ENCODE measurements at regions of chr20 and their contacts with region 1.

Region 1: DNA sequence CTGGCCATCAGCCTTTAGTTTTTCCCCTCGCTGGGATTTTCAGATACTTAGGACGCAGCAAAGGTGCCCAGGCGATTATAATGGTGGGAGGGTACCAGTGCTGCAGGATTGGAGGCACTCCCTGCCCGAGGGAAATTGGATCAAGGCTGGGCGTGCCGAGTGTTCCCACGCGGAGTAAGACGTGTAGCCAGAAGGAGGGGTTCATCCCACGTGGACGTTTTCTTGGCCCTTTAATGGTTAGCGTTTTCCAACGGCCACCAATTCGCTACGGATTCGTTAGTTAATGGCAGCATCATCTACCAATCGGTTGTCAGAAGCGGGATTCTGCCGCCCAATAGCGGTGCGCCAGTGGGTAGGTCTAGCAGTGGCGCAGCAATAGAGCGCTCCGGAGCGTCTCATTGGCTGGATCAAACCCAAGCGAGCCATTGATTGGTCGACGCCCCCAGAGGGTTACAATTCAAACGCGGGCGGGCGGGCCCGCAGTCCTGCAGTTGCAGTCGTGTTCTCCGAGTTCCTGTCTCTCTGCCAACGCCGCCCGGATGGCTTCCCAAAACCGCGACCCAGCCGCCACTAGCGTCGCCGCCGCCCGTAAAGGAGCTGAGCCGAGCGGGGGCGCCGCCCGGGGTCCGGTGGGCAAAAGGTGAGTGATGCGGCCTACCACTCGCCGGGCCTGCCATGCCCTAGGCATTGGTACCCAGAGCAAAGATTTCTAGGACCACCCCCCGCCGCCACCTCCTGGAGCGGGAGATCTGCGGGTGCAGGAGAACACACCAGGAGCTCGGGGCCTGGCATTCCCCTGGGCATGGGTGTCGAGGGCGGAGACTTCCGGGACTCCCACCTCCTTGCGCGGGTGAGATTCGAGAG is at the start of gene UBE2C:
- DNase-seq: peak; percentile 95 to 99
- H3K4me3 ChIP-seq: peak within 1 kb of the TSS; percentile 56 to 80
- H3K27ac ChIP-seq: peak within 1 kb of the TSS; percentile 16 to 45
- H3K4me1 ChIP-seq: peaks cover 9% of the 10 kb centered on the region in 2 donors
- H3K27me3 ChIP-seq: no peaks in the 10 kb centered on the region
- CTCF ChIP-seq: no peak
- total RNA-seq, gene UBE2C: not detected

Region 2: DNA sequence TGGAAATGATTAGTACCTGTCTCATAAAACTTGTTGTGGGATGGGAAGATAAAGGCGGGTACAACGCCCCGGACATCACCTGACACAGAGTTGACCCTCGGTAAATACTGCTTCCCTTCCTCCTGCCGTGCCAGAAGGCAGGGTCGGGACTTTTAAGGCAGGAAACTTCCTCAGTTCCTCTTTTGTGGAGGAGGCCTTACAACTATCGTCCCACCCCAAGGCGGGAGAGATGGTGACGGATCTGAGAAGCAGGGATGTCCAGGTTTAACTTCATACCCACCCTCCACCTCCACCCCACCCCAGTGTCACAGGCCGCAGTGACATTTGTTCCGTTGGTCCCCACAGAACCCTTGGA is 20.1 kb before region 1 on chr20:
- intact Hi-C with region 1: loop called (anchors 1 kb)
- DNase-seq: no peak
- H3K4me3 ChIP-seq: peak overlapping the region; percentile 79 to 89
- H3K27ac ChIP-seq: peak overlapping the region; percentile 94
- H3K4me1 ChIP-seq: peaks cover 4% of the 10 kb centered on the region in 2 donors
- H3K27me3 ChIP-seq: no peaks in the 10 kb centered on the region
- CTCF ChIP-seq: no peak

Region 3: GRCh38 chr20:45867819-45868176 is 55.4 kb after region 1 on chr20:
- intact Hi-C with region 1: no loop called
- DNase-seq: no peak
- H3K4me3 ChIP-seq: no peak overlapping the region
- H3K27ac ChIP-seq: no peak overlapping the region
- H3K4me1 ChIP-seq: no peaks in the 10 kb centered on the region
- H3K27me3 ChIP-seq: no peaks in the 10 kb centered on the region
- CTCF ChIP-seq: no peak

Region 4: GRCh38 chr20:45880988-45881788 is 68.8 kb after region 1 on chr20 and contains the start of gene ZSWIM1:
- intact Hi-C with region 1: loop called (anchors 5 kb)
- DNase-seq: peak; percentile 99 to 100
- H3K4me3 ChIP-seq: peak within 1 kb of the TSS; percentile 67 to 71
- H3K27ac ChIP-seq: peak within 1 kb of the TSS; percentile 83 to 88
- H3K4me1 ChIP-seq: peaks cover 0 to 14% of the 10 kb centered on the region in 2 donors
- H3K27me3 ChIP-seq: no peaks in the 10 kb centered on the region
- CTCF ChIP-seq: no peak
- total RNA-seq, gene ZSWIM1: 3.5 TPM

Region 5: DNA sequence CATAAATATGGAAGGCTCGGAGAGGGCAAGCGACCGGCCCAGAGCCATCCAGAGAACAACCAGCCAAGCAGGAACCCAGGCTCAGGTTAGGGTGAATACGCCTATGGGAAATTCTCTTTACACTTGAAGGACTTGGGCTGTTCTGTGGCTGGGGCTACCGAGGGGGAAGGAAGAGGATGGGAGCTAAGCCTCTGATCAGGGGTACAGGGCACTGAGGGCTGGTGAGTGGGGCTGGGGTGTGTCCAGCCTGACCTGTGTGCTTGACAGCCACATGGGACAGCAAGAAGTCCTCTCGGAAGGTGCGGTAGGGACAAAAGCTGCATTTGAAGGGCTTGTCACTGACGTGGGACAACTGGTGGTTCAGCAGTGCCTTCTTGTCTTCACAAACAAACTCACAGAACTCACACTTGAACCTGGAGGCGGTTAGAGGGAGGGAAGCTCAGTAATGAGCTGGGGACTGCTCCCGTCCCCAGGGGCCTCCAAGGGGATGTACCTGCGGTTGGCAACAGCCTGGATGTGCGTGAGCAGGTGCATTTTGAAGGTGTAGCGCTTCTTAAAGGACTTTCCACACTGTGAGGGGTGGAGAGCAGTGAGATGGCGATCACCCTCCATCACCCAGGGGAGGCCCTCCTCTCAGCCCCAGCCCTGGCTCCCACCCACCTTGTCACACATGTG is 147.7 kb after region 1 on chr20:
- intact Hi-C with region 1: no loop called
- DNase-seq: peak in 1 of 2 donors; percentile 60
- H3K4me3 ChIP-seq: no peak overlapping the region
- H3K27ac ChIP-seq: no peak overlapping the region
- H3K4me1 ChIP-seq: no peaks in the 10 kb centered on the region
- H3K27me3 ChIP-seq: no peaks in the 10 kb centered on the region
- CTCF ChIP-seq: no peak